ENCODE measurements at regions of chr10 and their contacts with region 1.

Region 1: GRCh38 chr10:31808258-31809218 is 120.1 kb downstream of the ARHGAP12 start:
- DNase-seq: peak in 4 of 5 donors; percentile 44 to 50 (median 48)
- H3K4me3 ChIP-seq: no peak overlapping the region
- H3K4me3 Mint-ChIP-seq: peak overlapping the region in 4 of 8 donors; percentile 26 to 71 (median 56)
- H3K27ac ChIP-seq: no peak overlapping the region
- H3K27ac Mint-ChIP-seq: peak overlapping the region in 5 of 7 donors; percentile 71 to 94 (median 88)
- H3K4me1 ChIP-seq: peaks cover 4% of the 10 kb centered on the region
- H3K4me1 Mint-ChIP-seq: peaks cover 3 to 7% (median 4%) of the 10 kb centered on the region in 4 donors
- H3K27me3 ChIP-seq: no peaks in the 10 kb centered on the region
- H3K27me3 Mint-ChIP-seq: no peaks in the 10 kb centered on the region

Region 2: GRCh38 chr10:30751678-30752331 is 1056.7 kb before region 1 on chr10:
- CTCF ChIA-PET with region 1: interaction called, 22 read pairs
- POLR2A ChIA-PET with region 1: no interaction called
- intact Hi-C with region 1: loop called (anchors 1 kb)
- DNase-seq: peak; percentile 49 to 72 (median 61)
- H3K4me3 ChIP-seq: no peak overlapping the region
- H3K4me3 Mint-ChIP-seq: peak overlapping the region in 6 of 8 donors; percentile 7 to 69 (median 22)
- H3K27ac ChIP-seq: no peak overlapping the region
- H3K27ac Mint-ChIP-seq: peak overlapping the region in 3 of 7 donors; percentile 62 to 82 (median 64)
- H3K4me1 ChIP-seq: peaks cover 4% of the 10 kb centered on the region
- H3K4me1 Mint-ChIP-seq: peaks cover 6 to 30% (median 22%) of the 10 kb centered on the region in 4 donors
- H3K27me3 ChIP-seq: no peaks in the 10 kb centered on the region
- H3K27me3 Mint-ChIP-seq: peaks cover 0 to 3% of the 10 kb centered on the region in 2 donors

Region 3: GRCh38 chr10:32005050-32005449 is 196.5 kb after region 1 on chr10:
- CTCF ChIA-PET with region 1: no interaction called
- POLR2A ChIA-PET with region 1: no interaction called
- intact Hi-C with region 1: no loop called
- DNase-seq: peak in 4 of 5 donors; percentile 28 to 39 (median 36)
- H3K4me3 ChIP-seq: no peak overlapping the region
- H3K4me3 Mint-ChIP-seq: no peak overlapping the region
- H3K27ac ChIP-seq: no peak overlapping the region
- H3K27ac Mint-ChIP-seq: peak overlapping the region in 3 of 7 donors; percentile 13 to 25 (median 14)
- H3K4me1 ChIP-seq: no peaks in the 10 kb centered on the region
- H3K4me1 Mint-ChIP-seq: peaks cover 2 to 12% (median 9%) of the 10 kb centered on the region in 4 donors
- H3K27me3 ChIP-seq: no peaks in the 10 kb centered on the region
- H3K27me3 Mint-ChIP-seq: no peaks in the 10 kb centered on the region

Measured in CD4-positive, alpha-beta memory T cell (primary cell).